HAP-1 (cell line): ENCODE measurements at regions of chr14 and their contacts with region 1.

Region 1: GRCh38 chr14:102694530-102695166 is 82.6 kb upstream of the TRAF3 start:
- DNase-seq: peak; percentile 74 to 82
- H3K4me3 ChIP-seq: no peak overlapping the region
- H3K4me1 ChIP-seq: peaks cover 25% of the 10 kb centered on the region
- H3K27me3 ChIP-seq: no peaks in the 10 kb centered on the region

Region 2: DNA sequence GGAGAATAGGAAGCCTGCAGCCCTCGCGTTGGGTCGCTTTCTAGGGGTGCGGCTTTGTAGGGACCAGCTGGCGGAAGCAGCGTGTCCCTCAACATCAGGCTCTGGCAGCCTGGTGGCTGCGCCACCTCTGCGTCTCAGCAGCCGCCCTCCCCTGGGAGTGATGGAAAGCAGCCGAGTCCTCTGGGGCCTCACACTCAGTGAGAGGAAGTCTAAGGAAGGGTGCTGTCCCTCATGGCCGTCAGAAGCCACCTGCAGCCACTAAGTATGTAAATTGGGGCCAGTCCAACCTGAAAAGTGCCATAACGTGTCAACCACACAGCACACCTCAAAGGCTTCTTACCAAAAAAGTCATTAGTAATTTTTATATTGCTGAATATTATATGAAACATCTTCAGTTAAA is 474.6 kb before region 1 on chr14:
- in situ Hi-C with region 1: no loop called
- DNase-seq: no peak
- H3K4me3 ChIP-seq: no peak overlapping the region
- H3K4me1 ChIP-seq: no peaks in the 10 kb centered on the region
- H3K27me3 ChIP-seq: no peaks in the 10 kb centered on the region

Region 3: GRCh38 chr14:102917469-102918211 is 223.0 kb after region 1 on chr14:
- in situ Hi-C with region 1: loop called (anchors 10 kb)
- DNase-seq: peak; percentile 46 to 86
- H3K4me3 ChIP-seq: no peak overlapping the region
- H3K4me1 ChIP-seq: no peaks in the 10 kb centered on the region
- H3K27me3 ChIP-seq: no peaks in the 10 kb centered on the region

Region 4: DNA sequence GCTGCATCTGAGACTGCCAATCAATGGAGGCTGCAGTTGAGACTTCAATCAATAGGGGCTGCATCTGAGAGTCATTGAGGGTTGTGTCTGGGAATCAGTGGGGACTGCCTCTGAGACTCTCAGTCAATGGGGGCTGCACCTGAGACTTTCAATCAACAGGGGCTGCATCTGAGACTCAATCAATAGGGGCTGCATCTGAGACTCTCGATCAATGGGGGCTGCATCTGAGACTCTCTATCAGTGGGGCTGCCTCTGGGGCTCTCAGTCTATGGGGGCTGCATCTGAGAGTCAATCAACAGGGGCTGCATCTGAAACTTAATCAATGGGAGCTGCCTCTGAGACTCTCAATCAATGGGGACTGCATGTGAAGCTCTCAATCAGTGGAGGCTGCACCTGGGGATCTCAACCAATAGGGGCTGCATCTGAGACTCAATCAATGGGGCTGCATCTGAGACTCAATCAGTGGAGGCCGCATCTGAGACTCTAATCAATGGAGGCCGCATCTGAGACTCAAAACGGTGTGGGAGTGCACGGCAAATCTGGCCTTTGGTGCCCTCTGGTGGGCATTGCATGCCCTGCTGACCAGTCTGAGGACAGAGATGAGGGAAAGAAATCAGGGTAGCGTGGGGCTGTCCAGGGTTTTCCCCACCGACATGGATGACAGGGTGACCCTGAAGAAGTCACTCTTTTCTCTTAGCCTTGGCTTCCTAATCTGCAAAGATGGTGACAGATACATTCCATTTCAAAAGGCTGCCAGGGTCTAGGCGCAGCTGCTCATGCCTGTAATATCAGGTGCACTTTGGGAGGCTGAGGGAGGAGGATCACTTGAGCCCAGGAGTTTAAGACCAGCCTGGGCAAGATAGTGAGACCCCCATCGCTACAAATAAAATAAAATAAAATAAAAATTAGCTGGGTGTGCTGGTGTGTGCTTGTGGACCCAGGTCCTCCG is 598.1 kb after region 1 on chr14:
- in situ Hi-C with region 1: loop called (anchors 25 kb)
- DNase-seq: peak; percentile 64 to 86
- H3K4me3 ChIP-seq: no peak overlapping the region
- H3K4me1 ChIP-seq: no peaks in the 10 kb centered on the region
- H3K27me3 ChIP-seq: no peaks in the 10 kb centered on the region

Region 5: DNA sequence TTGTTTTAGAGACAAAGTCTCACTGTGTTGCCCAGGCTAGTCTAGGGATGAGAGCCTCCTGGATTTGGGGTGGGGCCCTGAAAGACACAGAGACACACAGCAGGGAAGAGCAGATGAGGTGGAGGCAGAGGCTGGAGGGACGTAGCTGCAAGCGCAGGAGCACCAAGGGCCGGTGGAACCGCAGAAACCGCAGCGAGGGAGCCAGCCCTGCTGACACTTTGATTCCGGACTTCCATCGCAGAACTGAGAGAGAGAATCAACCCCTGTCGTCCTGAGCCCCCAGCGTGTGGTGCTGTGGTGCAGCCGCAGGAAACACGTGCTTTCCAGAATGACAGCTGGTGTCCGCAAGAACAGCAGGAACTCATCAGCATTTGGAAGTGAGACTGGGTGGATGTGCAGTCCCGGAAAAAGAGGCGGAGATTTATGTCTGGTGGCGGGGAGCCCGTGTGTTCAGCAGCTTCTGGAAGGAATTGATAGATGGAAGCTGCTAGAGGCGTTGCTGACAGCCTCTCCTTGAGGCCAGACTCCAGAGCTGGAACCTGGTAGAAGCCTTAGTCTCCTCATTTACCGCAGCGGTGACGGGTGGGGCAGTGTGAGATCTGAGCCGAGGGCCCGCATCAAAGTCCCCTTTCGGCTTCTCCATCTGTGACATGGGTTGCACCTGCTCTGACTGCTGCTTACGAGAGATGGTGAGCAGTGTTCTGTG is 912.5 kb after region 1 on chr14:
- in situ Hi-C with region 1: no loop called
- DNase-seq: peak; percentile 35 to 61
- H3K4me3 ChIP-seq: no peak overlapping the region
- H3K4me1 ChIP-seq: no peaks in the 10 kb centered on the region; the same call in none of the 2 replicates
- H3K27me3 ChIP-seq: peaks cover 9% of the 10 kb centered on the region